Activated CD8-positive, alpha-beta T cell treated with anti-CD3 and anti-CD28 coated beads, Interleukin-2, amount 10 ng/mL, durations not matched to agents 7 days and 5 days (primary cell): ENCODE measurements at regions of chr16 and their contacts with region 1.

Region 1: GRCh38 chr16:81403616-81404373 is 40.8 kb upstream of the CMIP start:
- DNase-seq: peak; percentile 87
- ATAC-seq: peak; percentile 95
- H3K4me3 Mint-ChIP-seq: no peak overlapping the region
- H3K27ac Mint-ChIP-seq: no peak overlapping the region
- H3K4me1 Mint-ChIP-seq: peaks cover 5% of the 10 kb centered on the region
- H3K27me3 Mint-ChIP-seq: peaks cover 13% of the 10 kb centered on the region

Region 2: GRCh38 chr16:81623363-81624102 is 219.7 kb after region 1 on chr16:
- CTCF ChIA-PET with region 1: interaction called, 27 read pairs
- POLR2A ChIA-PET with region 1: interaction called, 3 read pairs
- DNase-seq: peak; percentile 71
- ATAC-seq: peak; percentile 54
- H3K4me3 Mint-ChIP-seq: no peak overlapping the region
- H3K27ac Mint-ChIP-seq: peak overlapping the region; percentile 8
- H3K4me1 Mint-ChIP-seq: peaks cover 26% of the 10 kb centered on the region
- H3K27me3 Mint-ChIP-seq: no peaks in the 10 kb centered on the region

Region 3: DNA sequence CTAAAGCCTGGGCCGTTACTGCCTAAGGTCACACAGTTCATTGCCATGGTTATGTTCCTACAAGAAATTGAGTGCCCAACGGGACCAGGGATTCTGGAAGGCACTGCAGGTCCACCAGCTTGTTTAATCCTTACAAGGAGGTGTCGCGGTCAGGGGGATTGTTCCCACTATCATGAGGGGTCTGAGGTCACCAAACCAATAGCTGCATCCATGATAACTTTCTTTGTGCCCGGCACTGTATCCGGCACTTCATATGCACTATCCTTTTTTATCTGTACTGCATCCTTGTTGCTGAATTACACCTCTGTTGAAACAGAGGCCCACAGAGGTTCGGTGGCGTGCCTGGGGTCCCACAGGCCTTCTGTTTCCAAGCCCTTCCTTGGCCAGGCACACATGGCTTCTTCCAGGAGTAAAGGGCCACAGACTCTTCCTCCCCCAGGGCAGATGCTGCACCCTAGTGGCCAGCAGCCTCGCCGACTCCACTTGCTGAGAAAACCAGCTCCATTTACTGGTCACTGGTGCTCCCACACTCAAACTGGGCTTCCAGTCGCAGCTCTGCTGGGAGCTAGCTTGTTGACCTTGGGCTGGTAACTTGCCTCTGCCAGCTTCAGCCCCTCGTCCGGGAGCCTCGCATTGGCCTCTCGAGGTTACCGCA is 293.3 kb after region 1 on chr16:
- CTCF ChIA-PET with region 1: interaction called, 27 read pairs
- POLR2A ChIA-PET with region 1: no interaction called
- DNase-seq: peak; percentile 62
- ATAC-seq: peak; percentile 38
- H3K4me3 Mint-ChIP-seq: no peak overlapping the region
- H3K27ac Mint-ChIP-seq: peak overlapping the region; percentile 46
- H3K4me1 Mint-ChIP-seq: peaks cover 5% of the 10 kb centered on the region
- H3K27me3 Mint-ChIP-seq: no peaks in the 10 kb centered on the region

Region 4: GRCh38 chr16:81723098-81723723 is 319.4 kb after region 1 on chr16:
- CTCF ChIA-PET with region 1: interaction called, 11 read pairs
- POLR2A ChIA-PET with region 1: no interaction called
- DNase-seq: peak; percentile 72
- ATAC-seq: peak; percentile 85
- H3K4me3 Mint-ChIP-seq: no peak overlapping the region
- H3K27ac Mint-ChIP-seq: no peak overlapping the region
- H3K4me1 Mint-ChIP-seq: peaks cover 16% of the 10 kb centered on the region
- H3K27me3 Mint-ChIP-seq: peaks cover 15% of the 10 kb centered on the region

Region 5: GRCh38 chr16:81730090-81731051 is 326.6 kb after region 1 on chr16:
- CTCF ChIA-PET with region 1: interaction called, 19 read pairs
- POLR2A ChIA-PET with region 1: no interaction called
- DNase-seq: peak; percentile 67
- ATAC-seq: peak; percentile 92
- H3K4me3 Mint-ChIP-seq: peak overlapping the region; percentile 75
- H3K27ac Mint-ChIP-seq: peak overlapping the region; percentile 86
- H3K4me1 Mint-ChIP-seq: peaks cover 17% of the 10 kb centered on the region
- H3K27me3 Mint-ChIP-seq: peaks cover 12% of the 10 kb centered on the region

Region 6: DNA sequence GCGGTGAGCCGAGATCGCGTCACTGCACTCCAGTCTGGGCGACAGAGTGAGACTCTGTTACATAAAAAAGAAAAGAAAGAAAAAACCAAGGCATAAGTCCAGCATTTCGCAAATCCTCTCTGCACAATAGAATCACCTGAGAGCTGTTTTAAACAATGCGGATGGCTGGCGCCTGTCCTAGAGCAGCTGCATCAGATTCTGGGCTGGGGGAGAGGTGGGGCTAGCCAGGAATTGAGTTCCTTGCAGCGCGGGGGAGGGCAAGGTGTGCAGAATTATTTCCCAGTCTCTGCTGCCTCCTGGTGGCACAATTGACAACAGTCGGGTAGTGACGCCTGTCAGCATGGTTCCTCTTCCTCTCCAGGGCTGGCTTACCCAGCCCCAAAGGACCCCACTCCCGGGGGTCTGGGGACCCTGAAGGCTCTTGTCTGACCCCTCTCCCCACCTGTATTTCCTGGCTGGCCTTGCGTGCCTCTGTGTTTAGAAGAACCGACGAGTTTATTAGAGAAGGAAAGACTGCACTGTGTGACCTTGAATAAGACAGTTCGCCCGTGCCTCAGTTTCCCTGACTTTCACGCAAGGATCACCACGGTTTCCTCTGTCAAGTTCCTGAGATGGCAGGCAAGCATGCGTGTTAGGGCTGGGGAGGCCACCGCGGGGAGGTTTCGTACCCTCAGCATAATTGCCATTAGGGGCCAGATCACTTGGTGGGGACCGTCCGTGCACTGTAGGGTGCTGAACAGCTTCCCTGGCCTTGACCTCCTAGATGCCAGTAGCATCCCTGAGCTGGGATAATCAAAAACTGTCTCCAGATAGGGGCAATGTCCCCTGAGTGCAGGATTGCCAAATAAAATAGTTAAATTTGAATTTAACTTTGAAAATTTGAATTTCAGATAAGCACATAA is 334.3 kb after region 1 on chr16:
- CTCF ChIA-PET with region 1: interaction called, 19 read pairs
- POLR2A ChIA-PET with region 1: no interaction called
- DNase-seq: peak; percentile 91
- ATAC-seq: peak; percentile 96
- H3K4me3 Mint-ChIP-seq: peak overlapping the region; percentile 59
- H3K27ac Mint-ChIP-seq: peak overlapping the region; percentile 56
- H3K4me1 Mint-ChIP-seq: peaks cover 23% of the 10 kb centered on the region
- H3K27me3 Mint-ChIP-seq: peaks cover 11% of the 10 kb centered on the region